Tibial artery (tissue), 4 donors: ENCODE measurements at regions of chr19 and their contacts with region 1.

Region 1: GRCh38 chr19:3224346-3225168 is at the start of gene CELF5:
- DNase-seq: no peak
- H3K4me3 ChIP-seq: peak within 1 kb of the TSS in 1 of 2 donors; percentile 21
- H3K27ac ChIP-seq: no peak within 1 kb of the TSS
- H3K4me1 ChIP-seq: peaks cover 0 to 8% (median 2%) of the 10 kb centered on the region in 4 donors
- H3K27me3 ChIP-seq: peaks cover 0 to 94% of the 10 kb centered on the region in 2 donors
- CTCF ChIP-seq: peak; percentile 45 to 62

Region 2: GRCh38 chr19:3176603-3177501 is 47.7 kb before region 1 on chr19:
- intact Hi-C with region 1: no loop called
- DNase-seq: no peak
- H3K4me3 ChIP-seq: no peak overlapping the region
- H3K27ac ChIP-seq: no peak overlapping the region
- H3K4me1 ChIP-seq: no peaks in the 10 kb centered on the region
- H3K27me3 ChIP-seq: peaks cover 0 to 15% of the 10 kb centered on the region in 2 donors
- CTCF ChIP-seq: no peak

Region 3: GRCh38 chr19:3479177-3479833 is 254.7 kb after region 1 on chr19:
- intact Hi-C with region 1: loop called (anchors 5 kb)
- DNase-seq: peak in 1 of 2 donors; percentile 19
- H3K4me3 ChIP-seq: no peak overlapping the region
- H3K27ac ChIP-seq: no peak overlapping the region
- H3K4me1 ChIP-seq: peaks cover 0 to 9% (median 3%) of the 10 kb centered on the region in 4 donors
- H3K27me3 ChIP-seq: peaks cover 3 to 56% of the 10 kb centered on the region in 2 donors
- CTCF ChIP-seq: no peak